ENCODE measurements at regions of chr17 and their contacts with region 1.

Region 1: DNA sequence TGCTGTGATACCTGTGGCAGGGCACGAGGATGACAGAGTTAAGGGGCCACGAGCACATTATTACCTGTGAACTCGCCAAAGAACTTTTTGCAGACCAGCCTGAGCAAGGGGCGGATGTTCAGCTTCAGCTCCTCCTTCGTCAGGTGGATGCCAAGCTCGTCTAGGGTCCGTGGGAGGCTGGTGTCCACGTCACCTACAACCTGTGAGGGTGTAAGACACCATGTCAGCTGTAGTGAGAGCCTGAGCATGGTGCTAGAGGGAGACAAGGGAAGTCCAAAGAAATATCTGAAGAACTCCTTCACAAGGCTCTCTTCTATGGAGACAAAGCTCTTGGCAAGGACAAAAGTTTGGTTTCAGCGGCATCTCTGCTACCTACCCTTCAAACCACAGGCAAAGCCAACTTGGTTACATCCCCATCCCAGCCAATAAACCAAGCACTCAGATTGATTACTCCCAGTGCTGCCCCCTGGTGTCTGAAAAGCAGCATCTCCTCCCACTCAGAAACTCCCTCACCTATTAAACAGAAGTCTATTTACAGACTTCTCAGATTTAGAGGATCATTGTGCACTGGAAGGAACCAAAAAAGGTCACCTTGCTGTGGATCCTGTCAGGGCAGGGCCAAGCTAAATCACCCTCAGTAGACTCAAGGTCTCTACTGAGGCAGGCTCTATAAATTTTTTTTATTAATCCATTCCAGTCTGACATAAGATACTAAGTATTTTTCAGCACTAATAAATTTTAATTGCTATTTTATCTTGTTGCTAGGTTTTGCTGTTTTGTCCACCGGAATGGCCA is 17.4 kb downstream of the HIGD1B start:
- DNase-seq: peak; percentile 81
- H3K4me3 ChIP-seq: no peak overlapping the region
- H3K27ac ChIP-seq: peak overlapping the region; percentile 59; the same call in 1 of the 2 replicates
- H3K4me1 ChIP-seq: peaks cover 14% of the 10 kb centered on the region
- H3K27me3 ChIP-seq: no peaks in the 10 kb centered on the region

Region 2: GRCh38 chr17:44210342-44211192 is 654.5 kb before region 1 on chr17:
- in situ Hi-C with region 1: no loop called
- DNase-seq: peak; percentile 95
- H3K4me3 ChIP-seq: no peak overlapping the region
- H3K27ac ChIP-seq: peak overlapping the region; percentile 33
- H3K4me1 ChIP-seq: peaks cover 25% of the 10 kb centered on the region
- H3K27me3 ChIP-seq: no peaks in the 10 kb centered on the region

Region 3: DNA sequence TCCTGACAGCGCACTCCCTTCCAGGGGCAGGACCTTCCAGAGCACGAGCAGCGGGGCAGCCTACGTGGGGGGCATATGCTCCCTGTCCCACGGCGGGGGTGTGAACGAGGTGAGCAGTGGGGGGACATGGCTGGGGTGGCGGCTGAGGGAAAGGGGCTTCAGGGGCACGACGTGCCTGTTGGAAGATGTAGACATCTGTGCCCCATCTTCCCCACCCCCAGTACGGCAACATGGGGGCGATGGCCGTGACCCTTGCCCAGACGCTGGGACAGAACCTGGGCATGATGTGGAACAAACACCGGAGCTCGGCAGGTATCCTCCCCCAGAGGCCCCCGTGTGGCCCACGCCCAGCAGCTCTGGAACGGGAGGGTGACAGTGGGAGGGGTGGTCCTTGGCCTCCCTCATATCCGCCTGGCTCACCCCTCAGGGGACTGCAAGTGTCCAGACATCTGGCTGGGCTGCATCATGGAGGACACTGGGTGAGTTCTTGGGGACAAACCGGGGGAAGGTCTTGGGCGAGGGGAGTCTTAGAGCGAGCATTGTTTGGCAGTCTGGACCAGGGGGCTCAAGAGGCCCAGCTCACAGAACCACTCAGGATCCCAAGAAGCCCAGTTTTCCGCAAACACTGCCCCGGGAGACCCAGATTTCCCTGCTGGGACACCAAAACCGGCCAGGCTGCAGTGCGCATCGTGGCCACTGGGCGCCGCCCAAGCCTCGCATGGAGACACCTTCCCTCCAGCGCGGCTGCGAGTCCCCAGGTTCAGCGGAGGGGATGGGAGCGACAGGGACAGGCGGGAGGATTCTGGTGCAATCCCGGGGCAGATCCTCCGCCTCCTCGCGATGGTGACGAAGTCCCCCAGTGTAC is 90.6 kb before region 1 on chr17:
- in situ Hi-C with region 1: loop called (anchors 5 kb)
- DNase-seq: peak; percentile 92
- H3K4me3 ChIP-seq: peak overlapping the region; percentile 72
- H3K27ac ChIP-seq: no peak overlapping the region
- H3K4me1 ChIP-seq: no peaks in the 10 kb centered on the region
- H3K27me3 ChIP-seq: no peaks in the 10 kb centered on the region